A549 (cell line): ENCODE measurements at regions of chr5 and their contacts with region 1.

Region 1: DNA sequence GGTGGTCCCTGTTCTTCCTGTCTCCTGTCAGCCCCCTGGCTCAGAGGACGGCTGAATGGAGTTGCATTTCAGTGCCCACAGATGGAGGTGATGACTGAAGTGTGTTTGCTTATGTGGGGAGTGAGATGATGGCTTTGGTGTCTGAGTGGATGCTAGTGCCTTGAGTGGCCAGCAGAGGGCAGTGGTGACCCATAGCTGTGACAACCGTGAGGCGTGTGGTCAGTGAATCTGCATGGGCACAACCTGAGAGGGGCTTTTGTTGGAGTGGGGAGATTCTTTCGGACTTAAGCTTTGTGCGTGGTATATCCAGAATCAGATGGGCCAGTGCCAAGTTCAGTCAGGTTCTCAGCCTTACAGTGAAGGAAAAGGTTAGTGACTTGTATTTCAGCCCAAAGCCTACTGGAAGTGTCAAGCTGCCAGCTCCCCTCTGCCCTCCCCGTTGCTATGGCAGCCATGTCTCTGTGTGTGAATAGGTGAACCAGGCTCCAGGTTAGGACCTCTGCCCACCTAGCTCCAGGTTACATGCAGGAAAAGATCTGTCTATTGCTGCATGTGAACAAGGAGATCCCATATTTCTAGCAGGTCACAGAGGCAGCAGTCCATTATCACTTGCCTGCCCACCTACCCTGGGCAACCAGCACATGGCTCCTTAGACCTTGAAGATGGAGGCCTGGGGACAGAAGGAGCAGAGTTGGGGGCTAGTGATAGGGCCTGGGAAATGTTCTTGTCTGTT is 14.7 kb upstream of the CXXC5 start:
- DNase-seq: peak; percentile 77 to 79
- ATAC-seq: peak; percentile 70 to 80
- H3K4me3 ChIP-seq: no peak overlapping the region
- H3K27ac ChIP-seq: peak overlapping the region in 1 of 2 experiments; percentile 51; a peak in 3 of 6 replicates
- H3K4me1 ChIP-seq: peaks cover 38% of the 10 kb centered on the region
- CTCF ChIP-seq: peak; percentile 95
- EP300 ChIP-seq: no peak
- POLR2A ChIP-seq: no peak
- RAD21 ChIP-seq: peak; percentile 94 to 95

Region 2: GRCh38 chr5:139593716-139594319 is 39.6 kb before region 1 on chr5:
- CTCF ChIA-PET with region 1: interaction called, 10 read pairs
- POLR2A ChIA-PET with region 1: no interaction called
- DNase-seq: peak; percentile 40 to 65
- ATAC-seq: peak; percentile 68 to 70; a peak in 5 of 6 replicates
- H3K4me3 ChIP-seq: no peak overlapping the region
- H3K27ac ChIP-seq: peak overlapping the region; percentile 49 to 75; a peak in 5 of 6 replicates
- H3K4me1 ChIP-seq: peaks cover 42% of the 10 kb centered on the region
- CTCF ChIP-seq: no peak
- EP300 ChIP-seq: no peak
- POLR2A ChIP-seq: no peak
- RAD21 ChIP-seq: no peak

Region 3: DNA sequence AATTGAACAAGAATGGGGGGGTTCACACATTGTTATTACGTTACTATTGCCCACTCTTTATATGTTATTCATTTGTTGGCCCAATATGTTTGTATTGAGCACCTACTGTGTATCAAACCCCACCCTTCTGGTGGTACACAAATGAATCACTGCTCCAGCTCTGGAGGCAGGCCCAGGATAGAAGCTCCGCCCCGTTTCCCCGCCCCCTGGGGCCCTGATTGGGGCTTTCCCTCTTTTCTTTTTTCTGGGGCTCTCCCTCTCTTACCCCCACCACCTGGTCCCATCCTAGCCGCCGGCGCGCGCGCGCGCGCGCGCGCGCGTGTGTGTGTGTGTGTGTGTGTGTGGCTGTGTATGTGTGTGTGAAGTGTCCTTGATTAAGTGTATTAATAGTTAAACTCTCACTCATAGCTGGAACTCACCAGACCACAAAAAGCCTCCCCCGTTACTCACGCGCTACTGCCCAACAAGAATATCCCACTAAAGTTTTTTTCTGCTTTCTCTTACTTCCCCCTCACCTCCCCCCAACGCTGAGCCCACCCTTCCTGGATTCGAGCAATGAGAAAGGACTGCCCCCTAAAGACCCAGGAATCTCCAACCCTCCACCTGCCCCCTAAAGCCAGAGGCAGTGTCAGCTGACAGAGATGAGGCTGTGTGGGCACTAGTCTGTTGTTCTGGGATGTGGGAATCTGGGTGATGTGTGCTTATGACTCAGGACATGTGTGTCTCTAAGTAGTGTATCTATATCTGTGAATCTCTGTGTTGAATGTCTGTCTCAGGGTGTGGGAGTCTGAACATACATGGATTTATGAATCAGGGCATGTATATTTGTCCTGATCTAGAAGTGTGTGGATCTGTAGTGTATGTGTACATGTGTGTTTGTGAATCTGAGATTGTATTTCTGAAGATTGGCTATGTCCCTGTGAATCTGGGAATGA is 18.7 kb after region 1 on chr5:
- CTCF ChIA-PET with region 1: interaction called, 195 read pairs
- POLR2A ChIA-PET with region 1: interaction called, 5 read pairs
- DNase-seq: peak; percentile 64 to 88
- ATAC-seq: peak; percentile 20 to 53; a peak in 3 of 6 replicates
- H3K4me3 ChIP-seq: peak overlapping the region; percentile 16; the same call in 2 of the 3 replicates
- H3K27ac ChIP-seq: peak overlapping the region; percentile 66 to 98
- H3K4me1 ChIP-seq: peaks cover 81% of the 10 kb centered on the region
- CTCF ChIP-seq: no peak
- EP300 ChIP-seq: no peak
- POLR2A ChIP-seq: no peak
- RAD21 ChIP-seq: no peak

Region 4: GRCh38 chr5:139684881-139685749 is 51.7 kb after region 1 on chr5:
- CTCF ChIA-PET with region 1: interaction called, 248 read pairs
- POLR2A ChIA-PET with region 1: no interaction called
- DNase-seq: no peak
- ATAC-seq: peak in 1 of 2 experiments; percentile 21; a peak in 3 of 6 replicates
- H3K4me3 ChIP-seq: no peak overlapping the region
- H3K27ac ChIP-seq: peak overlapping the region in 1 of 2 experiments; percentile 65; a peak in 1 of 6 replicates
- H3K4me1 ChIP-seq: peaks cover 31% of the 10 kb centered on the region
- CTCF ChIP-seq: no peak
- EP300 ChIP-seq: no peak
- POLR2A ChIP-seq: no peak
- RAD21 ChIP-seq: no peak

Region 5: DNA sequence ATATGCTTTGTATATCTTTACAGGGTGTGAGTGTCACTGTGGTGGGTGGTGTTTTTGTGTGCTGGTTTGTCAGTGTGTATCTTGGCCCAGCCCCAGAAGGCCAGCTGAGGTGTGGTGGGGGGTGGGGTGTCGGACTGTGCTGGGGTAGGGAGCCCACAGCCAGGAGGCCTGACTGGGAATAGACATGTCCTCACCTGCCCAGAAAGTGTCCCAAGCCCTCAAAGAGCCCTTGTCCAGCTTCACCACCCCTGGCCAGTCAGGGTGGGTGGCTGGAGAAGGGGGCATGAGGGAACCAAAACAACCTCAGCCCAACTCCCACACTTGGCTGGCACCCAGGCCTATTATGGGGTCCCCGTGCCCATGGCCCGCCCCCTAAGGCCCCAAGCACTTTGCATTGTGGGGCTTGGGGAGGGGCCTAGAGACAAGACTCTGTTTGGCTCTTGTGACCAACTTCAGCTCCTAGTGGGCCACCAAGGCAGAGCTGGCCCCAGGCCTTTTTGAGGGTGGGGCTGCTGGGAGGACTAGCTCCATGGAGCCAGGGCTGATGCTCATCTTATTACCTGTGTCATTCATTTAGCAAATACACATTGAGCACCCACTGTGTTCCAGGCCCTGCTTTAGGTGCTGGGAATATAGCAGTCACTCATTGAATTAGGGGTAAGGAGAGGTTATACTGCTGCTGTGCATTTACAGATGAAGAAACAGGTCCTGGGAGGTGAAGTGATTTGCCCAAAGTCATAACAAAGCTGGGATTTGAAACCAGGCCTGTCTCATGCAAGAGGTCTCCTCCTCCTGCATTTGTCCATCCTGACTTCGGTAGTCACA is 105.9 kb after region 1 on chr5:
- CTCF ChIA-PET with region 1: interaction called, 11 read pairs
- POLR2A ChIA-PET with region 1: no interaction called
- DNase-seq: no peak
- ATAC-seq: no peak
- H3K4me3 ChIP-seq: no peak overlapping the region
- H3K27ac ChIP-seq: peak overlapping the region; percentile 25 to 80; a peak in 4 of 6 replicates
- H3K4me1 ChIP-seq: peaks cover 20% of the 10 kb centered on the region
- CTCF ChIP-seq: no peak
- EP300 ChIP-seq: no peak
- POLR2A ChIP-seq: no peak
- RAD21 ChIP-seq: no peak